ENCODE measurements at regions of chr10 and their contacts with region 1.

Region 1: GRCh38 chr10:117174439-117175214 is 22.7 kb upstream of the KCNK18 start:
- DNase-seq: peak; percentile 80 to 91
- ATAC-seq: peak; percentile 84 to 93
- H3K4me3 ChIP-seq: peak overlapping the region; percentile 55
- H3K27ac ChIP-seq: peak overlapping the region in 1 of 2 experiments; percentile 59; a peak in 3 of 6 replicates
- H3K4me1 ChIP-seq: 0 out of 3 replicates have a peak, but pooled peaks cover 4% of the 10 kb centered on the region
- CTCF ChIP-seq: peak; percentile 89
- EP300 ChIP-seq: no peak
- POLR2A ChIP-seq: no peak
- RAD21 ChIP-seq: peak; percentile 88 to 93

Region 2: GRCh38 chr10:116627386-116627933 is 547.2 kb before region 1 on chr10:
- CTCF ChIA-PET with region 1: interaction called, 15 read pairs
- POLR2A ChIA-PET with region 1: no interaction called
- DNase-seq: peak; percentile 44 to 48
- ATAC-seq: peak; percentile 92 to 97
- H3K4me3 ChIP-seq: peak overlapping the region; percentile 56
- H3K27ac ChIP-seq: peak overlapping the region; percentile 58 to 74; a peak in 4 of 6 replicates
- H3K4me1 ChIP-seq: no peaks in the 10 kb centered on the region
- CTCF ChIP-seq: peak; percentile 52
- EP300 ChIP-seq: no peak
- POLR2A ChIP-seq: no peak
- RAD21 ChIP-seq: peak; percentile 47 to 67

Region 3: GRCh38 chr10:116765547-116766162 is 409.0 kb before region 1 on chr10:
- CTCF ChIA-PET with region 1: interaction called, 11 read pairs
- POLR2A ChIA-PET with region 1: no interaction called
- DNase-seq: no peak
- ATAC-seq: no peak
- H3K4me3 ChIP-seq: no peak overlapping the region
- H3K27ac ChIP-seq: peak overlapping the region; percentile 6 to 86; a peak in 4 of 6 replicates
- H3K4me1 ChIP-seq: peaks cover 40% of the 10 kb centered on the region
- CTCF ChIP-seq: 0 out of 3 replicates have a peak, but pooled peaks have one; percentile 14
- EP300 ChIP-seq: no peak
- POLR2A ChIP-seq: no peak
- RAD21 ChIP-seq: 0 out of 5 replicates have a peak, but pooled peaks of 1 of the 2 experiments have one; percentile 5

Region 4: GRCh38 chr10:116796910-116797513 is 377.6 kb before region 1 on chr10:
- CTCF ChIA-PET with region 1: interaction called, 1,061 read pairs
- POLR2A ChIA-PET with region 1: interaction called, 8 read pairs
- DNase-seq: peak; percentile 72 to 78
- ATAC-seq: peak; percentile 90 to 99
- H3K4me3 ChIP-seq: no peak overlapping the region
- H3K27ac ChIP-seq: no peak overlapping the region
- H3K4me1 ChIP-seq: no peaks in the 10 kb centered on the region
- CTCF ChIP-seq: peak; percentile 93
- EP300 ChIP-seq: no peak
- POLR2A ChIP-seq: no peak
- RAD21 ChIP-seq: peak; percentile 96 to 98

Region 5: DNA sequence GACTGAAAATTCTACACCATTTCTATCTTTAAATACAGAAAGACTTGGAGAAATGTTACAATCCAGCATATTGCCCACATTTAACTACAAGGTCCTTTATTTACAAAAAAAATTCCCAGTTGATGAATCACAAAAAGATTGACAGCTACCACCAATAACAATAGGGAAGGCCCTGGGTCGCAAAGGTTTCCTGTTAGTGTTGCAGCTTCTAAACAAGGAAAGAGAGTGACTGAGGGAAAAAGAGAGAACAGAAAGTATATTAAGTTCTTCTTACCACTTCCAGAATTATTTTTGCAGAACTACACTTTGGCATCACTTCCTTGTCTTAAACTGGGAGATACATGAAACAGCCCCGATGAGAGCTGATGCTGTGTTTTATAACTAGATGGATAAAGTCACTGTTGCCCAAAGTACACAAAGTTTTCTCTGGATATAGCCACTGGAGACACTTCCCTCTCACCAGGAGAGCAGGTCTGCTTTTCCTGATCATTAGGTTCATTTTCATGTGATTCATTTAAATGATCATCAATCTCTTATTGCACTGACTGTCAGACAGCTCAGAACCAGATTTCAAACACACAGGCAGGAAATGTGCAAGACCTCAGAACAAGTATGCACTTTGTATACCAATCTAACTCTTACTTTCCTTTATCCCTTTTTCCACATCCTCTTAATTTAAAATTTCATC is 226.6 kb before region 1 on chr10:
- CTCF ChIA-PET with region 1: interaction called, 11 read pairs
- POLR2A ChIA-PET with region 1: no interaction called
- DNase-seq: peak; percentile 28 to 45
- ATAC-seq: peak; percentile 56 to 72
- H3K4me3 ChIP-seq: peak overlapping the region; percentile 1; the same call in 1 of the 3 replicates
- H3K27ac ChIP-seq: peak overlapping the region; percentile 28 to 67
- H3K4me1 ChIP-seq: peaks cover 20% of the 10 kb centered on the region
- CTCF ChIP-seq: no peak
- EP300 ChIP-seq: no peak
- POLR2A ChIP-seq: no peak
- RAD21 ChIP-seq: no peak

Region 6: DNA sequence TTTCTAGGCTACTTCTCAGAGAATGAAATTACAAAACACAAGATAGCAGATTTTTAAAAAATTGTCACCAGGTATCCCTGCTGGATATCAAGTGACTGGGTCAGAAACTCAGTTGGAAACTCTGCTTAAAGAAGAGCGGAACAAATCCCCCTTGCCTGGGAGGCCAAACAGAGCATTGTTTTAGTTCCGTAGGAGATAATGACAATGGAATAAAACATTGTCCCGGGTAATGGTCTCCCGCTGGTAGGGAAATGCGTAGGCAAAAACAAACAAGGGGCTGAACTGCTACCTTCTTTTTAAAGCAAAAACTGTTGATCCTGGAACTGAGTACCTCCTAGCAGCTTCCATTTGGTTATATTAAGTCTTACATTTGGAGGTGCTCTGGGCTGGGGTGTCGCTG is 15.2 kb before region 1 on chr10:
- CTCF ChIA-PET with region 1: interaction called, 21 read pairs
- POLR2A ChIA-PET with region 1: no interaction called
- DNase-seq: no peak
- ATAC-seq: no peak
- H3K4me3 ChIP-seq: no peak overlapping the region
- H3K27ac ChIP-seq: no peak overlapping the region
- H3K4me1 ChIP-seq: 0 out of 3 replicates have a peak, but pooled peaks cover 3% of the 10 kb centered on the region
- CTCF ChIP-seq: no peak
- EP300 ChIP-seq: no peak
- POLR2A ChIP-seq: no peak
- RAD21 ChIP-seq: no peak

Measured in A549 (cell line).